Activated CD8-positive, alpha-beta memory T cell treated with anti-CD3 and anti-CD28 coated beads, Interleukin-2, amount 10 ng/mL, durations not matched to agents 7 days and 5 days (primary cell): ENCODE measurements at regions of chr20 and their contacts with region 1.

Region 1: GRCh38 chr20:17938871-17939619 is 29.5 kb downstream of the SNX5 start:
- DNase-seq: peak; percentile 80
- ATAC-seq: peak; percentile 92
- H3K4me3 Mint-ChIP-seq: no peak overlapping the region
- H3K27ac Mint-ChIP-seq: peak overlapping the region; percentile 75
- H3K4me1 Mint-ChIP-seq: peaks cover 30% of the 10 kb centered on the region
- H3K27me3 Mint-ChIP-seq: no peaks in the 10 kb centered on the region

Region 2: DNA sequence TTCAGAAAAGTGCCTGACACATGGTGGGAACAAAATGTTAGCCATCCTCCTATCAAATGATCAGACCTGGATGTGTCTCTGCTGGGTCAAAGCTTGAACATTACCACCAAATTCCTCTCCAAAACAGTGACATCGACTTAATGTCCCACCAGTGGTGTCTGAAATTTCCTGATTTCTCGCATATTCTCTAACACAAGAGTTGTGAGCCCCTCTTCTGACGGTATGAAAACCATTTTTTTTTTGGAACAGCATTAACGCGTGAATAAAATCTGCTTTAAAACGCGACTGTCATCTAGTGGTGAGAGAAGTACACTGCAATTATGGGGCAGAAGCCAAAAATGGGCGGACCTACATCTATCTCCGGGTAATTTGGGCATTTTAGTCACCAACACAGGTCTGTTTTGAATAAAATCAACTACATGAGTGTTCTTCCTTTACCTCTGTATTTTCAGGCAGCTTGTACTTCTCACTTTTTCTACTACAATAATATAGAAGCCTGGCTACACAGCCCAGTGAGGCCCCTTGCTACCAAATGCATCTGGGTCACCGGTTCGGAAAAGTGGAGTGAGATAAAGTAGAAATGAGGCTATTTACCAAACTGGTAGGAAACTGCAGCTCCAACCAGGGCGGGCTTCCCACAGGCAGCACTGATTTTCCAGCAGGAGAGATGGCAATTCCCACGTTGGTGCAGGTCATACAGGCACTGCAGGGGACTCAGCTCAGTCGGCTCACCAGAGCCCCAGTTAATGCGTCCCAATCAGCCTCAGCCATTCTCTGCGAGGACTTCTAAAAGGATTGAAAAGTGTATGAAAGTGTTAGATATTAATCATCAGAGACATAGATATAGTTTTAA is 57.1 kb after region 1 on chr20:
- CTCF ChIA-PET with region 1: interaction called, 14 read pairs
- DNase-seq: peak; percentile 59
- ATAC-seq: peak; percentile 52
- H3K4me3 Mint-ChIP-seq: no peak overlapping the region
- H3K27ac Mint-ChIP-seq: no peak overlapping the region
- H3K4me1 Mint-ChIP-seq: peaks cover 40% of the 10 kb centered on the region
- H3K27me3 Mint-ChIP-seq: no peaks in the 10 kb centered on the region